Activated T-helper 2 cell treated with anti-CD3 and anti-CD28 coated beads, Interferon-gamma antibody, Interleukin-2, Interleukin-4, amounts not matched to agents 10 μg/mL and 5 μg/mL and 100 μg/mL, durations not matched to agents 14 hours and 24 hours and 36 hours (primary cell): ENCODE measurements at regions of chr3 and their contacts with region 1.

Region 1: DNA sequence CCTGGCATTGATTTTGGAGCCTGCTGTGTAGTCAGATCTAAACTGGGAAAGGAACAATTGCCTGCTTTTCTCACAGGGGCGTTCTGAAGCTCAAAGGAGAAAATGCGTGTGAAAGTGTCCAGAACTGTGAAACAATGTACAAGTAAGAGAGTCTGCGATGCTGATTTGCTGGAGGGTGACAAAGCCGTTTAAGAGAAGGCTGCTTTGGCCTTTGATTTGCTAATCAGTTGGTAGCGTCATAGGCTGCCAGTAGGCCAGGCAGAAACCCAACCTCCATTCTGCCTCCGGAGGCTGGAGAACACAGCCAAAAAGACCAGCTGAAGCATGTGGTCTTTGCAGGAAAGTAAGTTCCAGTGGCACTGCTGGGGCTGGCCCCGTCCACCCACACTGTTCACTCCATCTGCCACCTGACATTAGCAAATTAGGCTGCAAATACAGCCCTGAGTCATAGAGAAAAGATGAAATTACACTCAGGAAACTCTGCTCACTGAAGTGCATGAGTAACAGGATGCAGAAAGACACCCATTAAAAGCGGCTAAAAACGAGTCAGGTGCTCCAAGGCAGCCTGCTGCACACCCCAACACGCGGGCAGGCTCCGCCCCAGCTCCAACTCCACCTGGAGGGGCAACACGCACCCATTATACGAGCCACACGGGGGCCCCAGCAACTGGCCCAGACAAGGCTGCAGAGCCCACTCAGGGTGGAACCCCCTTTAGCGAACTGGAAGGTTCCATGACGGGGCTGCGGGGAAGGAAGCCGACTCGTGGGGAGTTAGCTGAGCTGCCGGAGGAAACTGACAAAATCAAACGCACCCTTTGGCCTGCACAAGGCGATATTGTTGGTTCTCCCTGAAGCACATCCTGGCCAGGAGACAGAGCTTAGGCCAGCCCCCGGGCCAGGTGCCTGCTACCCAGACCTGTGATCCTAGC is 31.6 kb downstream of the ZDHHC19 start:
- DNase-seq: peak; percentile 81
- H3K4me3 Mint-ChIP-seq: peak overlapping the region; percentile 67
- H3K27ac Mint-ChIP-seq: peak overlapping the region; percentile 98
- H3K4me1 Mint-ChIP-seq: peaks cover 52% of the 10 kb centered on the region
- H3K27me3 Mint-ChIP-seq: no peaks in the 10 kb centered on the region

Region 2: GRCh38 chr3:195259475-195260279 is 920.0 kb before region 1 on chr3:
- intact Hi-C with region 1: no loop called
- DNase-seq: peak; percentile 80
- H3K4me3 Mint-ChIP-seq: peak overlapping the region; percentile 55
- H3K27ac Mint-ChIP-seq: peak overlapping the region; percentile 38
- H3K4me1 Mint-ChIP-seq: peaks cover 29% of the 10 kb centered on the region
- H3K27me3 Mint-ChIP-seq: no peaks in the 10 kb centered on the region

Region 3: GRCh38 chr3:195909644-195910508 is 269.8 kb before region 1 on chr3:
- intact Hi-C with region 1: loop called (anchors 2 kb)
- DNase-seq: peak; percentile 84
- H3K4me3 Mint-ChIP-seq: peak overlapping the region; percentile 57
- H3K27ac Mint-ChIP-seq: peak overlapping the region; percentile 70
- H3K4me1 Mint-ChIP-seq: peaks cover 32% of the 10 kb centered on the region
- H3K27me3 Mint-ChIP-seq: no peaks in the 10 kb centered on the region

Region 4: GRCh38 chr3:196111939-196112386 is 67.7 kb before region 1 on chr3:
- intact Hi-C with region 1: loop called (anchors 1 kb)
- DNase-seq: no peak
- H3K4me3 Mint-ChIP-seq: peak overlapping the region; percentile 17
- H3K27ac Mint-ChIP-seq: peak overlapping the region; percentile 95
- H3K4me1 Mint-ChIP-seq: peaks cover 17% of the 10 kb centered on the region
- H3K27me3 Mint-ChIP-seq: no peaks in the 10 kb centered on the region

Region 5: DNA sequence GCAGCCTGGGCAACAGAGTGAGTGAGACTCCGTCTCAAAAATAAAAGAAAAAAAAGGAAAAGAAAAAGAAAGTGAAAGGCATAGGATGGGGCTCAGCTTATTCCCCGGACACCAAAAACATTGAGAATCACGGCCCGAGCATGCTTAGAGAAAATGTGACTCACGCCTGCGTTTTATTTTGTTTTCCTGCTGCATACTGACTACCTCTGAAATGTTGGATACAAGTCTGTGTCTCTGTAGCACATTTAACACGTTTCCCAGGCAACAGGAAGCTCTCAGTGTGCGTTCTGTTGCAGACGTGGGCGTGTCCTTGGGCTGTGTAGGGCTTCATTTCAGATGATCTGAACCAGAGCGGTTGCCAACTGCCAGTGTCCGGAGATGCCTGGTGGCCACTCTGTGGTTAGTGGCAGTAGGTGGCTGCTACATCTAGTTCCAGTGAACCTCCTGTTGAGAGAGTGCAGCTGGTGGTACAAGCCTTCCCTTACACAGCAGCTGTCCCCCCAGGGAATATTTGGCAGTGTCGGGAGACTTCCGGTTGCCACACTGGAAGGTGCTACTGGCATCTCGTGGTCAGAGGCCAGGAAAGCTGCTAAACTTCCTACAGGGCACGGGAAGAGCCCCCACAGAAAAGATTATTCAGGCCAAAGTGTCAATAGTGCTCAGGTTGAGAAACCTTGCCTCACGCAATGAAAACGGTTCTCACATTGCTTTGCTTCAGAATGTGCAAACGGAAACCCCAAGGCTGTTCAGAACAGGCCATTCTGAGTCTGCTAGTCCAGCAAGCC is 39.7 kb after region 1 on chr3:
- intact Hi-C with region 1: loop called (anchors 1 kb)
- DNase-seq: peak; percentile 64
- H3K4me3 Mint-ChIP-seq: peak overlapping the region; percentile 59
- H3K27ac Mint-ChIP-seq: peak overlapping the region; percentile 75
- H3K4me1 Mint-ChIP-seq: peaks cover 12% of the 10 kb centered on the region
- H3K27me3 Mint-ChIP-seq: peaks cover 5% of the 10 kb centered on the region